Left lung (tissue), 14 donors: ENCODE measurements at regions of chr20 and their contacts with region 1.

Region 1: DNA sequence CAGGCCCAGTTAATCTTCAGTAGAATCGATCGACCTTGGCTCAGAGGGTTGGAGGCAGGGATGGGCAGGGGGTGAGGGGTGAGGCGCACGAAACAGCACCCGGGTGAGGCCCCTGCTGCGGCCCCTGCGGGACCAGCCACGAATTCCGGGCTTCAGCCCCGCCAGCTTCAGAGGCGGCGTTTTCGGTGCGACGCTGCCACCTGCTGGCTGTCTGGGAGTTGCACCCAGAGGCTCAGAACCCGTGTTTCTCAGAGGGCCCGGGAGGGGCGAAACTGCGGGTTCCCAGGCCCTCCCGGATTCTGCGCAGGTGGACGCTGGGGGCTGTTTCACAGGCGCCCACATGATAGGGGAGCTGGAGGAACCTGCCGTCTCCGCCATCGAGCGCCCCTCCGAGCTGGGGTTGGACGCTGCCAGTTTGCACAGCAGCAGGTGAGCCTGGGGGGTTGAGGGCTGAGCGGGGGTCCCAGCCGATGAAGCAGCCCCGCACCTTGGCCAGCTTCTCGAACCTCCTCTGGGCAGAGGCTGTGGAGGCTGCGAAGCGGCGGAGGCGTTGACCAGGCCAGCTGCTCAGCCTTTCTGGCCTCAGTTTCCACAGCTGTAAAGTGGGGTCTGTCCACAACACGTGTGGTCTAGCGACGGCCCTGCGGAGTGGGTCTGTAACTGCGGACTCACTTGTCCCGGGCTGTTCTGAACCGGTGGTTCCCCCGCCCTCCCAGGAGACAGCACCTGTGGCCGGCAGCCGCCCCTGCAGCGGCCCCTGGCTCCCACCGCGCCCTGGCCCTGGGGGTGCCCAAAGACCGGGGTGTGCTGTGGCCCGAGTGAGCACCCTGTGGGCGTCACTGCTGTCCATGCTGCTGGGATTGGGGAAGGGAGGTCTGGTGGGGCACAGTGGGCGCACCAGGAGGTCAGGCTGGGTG is 2.5 kb upstream of the BHLHE23 start:
- DNase-seq: peak; percentile 56 to 94 (median 72)
- ATAC-seq: peak; percentile 95
- H3K4me3 ChIP-seq: no peak overlapping the region
- H3K27ac ChIP-seq: no peak overlapping the region
- H3K4me1 ChIP-seq: peaks cover 4 to 36% of the 10 kb centered on the region in 2 donors
- H3K27me3 ChIP-seq: peaks cover 89 to 100% of the 10 kb centered on the region in 2 donors
- CTCF ChIP-seq: peak; percentile 94 to 95

Region 2: DNA sequence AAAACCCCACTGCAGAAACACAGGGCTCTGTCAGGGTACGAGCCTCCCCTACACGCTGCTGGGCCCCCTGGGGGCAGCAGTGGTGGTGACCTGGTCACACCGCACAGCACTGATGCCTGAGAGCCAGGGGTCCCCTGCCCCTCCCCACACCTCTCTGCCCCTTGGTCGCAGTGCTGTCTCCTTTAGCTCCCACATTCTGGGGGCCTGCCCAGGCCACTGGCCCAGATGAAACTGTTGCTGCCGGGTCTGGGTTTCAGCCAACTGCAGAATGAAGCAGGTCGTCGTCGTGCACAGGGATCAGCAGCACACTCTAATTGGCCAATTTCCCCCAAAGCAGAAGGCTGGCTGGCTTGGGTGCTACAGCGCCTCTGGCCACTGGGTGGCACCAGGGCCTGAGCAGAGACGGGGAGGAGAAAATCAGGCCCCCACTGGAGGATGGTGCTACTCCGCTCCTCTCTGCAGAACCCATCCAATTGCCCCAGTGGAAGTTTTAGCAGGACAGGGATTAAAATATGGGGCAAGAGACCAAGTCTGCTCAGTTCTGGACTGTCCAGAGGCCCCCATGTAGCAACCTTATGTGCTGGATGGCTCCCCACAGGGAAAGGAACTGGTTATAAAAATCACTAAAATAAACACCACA is 109.1 kb before region 1 on chr20:
- intact Hi-C with region 1: loop called (anchors 2 to 10 kb)
- DNase-seq: peak; percentile 50 to 86 (median 75)
- ATAC-seq: peak; percentile 94
- H3K4me3 ChIP-seq: no peak overlapping the region
- H3K27ac ChIP-seq: peak overlapping the region in 1 of 2 donors; percentile 7
- H3K4me1 ChIP-seq: peaks cover 7 to 21% of the 10 kb centered on the region in 2 donors
- H3K27me3 ChIP-seq: no peaks in the 10 kb centered on the region
- CTCF ChIP-seq: peak; percentile 84 to 91

Region 3: DNA sequence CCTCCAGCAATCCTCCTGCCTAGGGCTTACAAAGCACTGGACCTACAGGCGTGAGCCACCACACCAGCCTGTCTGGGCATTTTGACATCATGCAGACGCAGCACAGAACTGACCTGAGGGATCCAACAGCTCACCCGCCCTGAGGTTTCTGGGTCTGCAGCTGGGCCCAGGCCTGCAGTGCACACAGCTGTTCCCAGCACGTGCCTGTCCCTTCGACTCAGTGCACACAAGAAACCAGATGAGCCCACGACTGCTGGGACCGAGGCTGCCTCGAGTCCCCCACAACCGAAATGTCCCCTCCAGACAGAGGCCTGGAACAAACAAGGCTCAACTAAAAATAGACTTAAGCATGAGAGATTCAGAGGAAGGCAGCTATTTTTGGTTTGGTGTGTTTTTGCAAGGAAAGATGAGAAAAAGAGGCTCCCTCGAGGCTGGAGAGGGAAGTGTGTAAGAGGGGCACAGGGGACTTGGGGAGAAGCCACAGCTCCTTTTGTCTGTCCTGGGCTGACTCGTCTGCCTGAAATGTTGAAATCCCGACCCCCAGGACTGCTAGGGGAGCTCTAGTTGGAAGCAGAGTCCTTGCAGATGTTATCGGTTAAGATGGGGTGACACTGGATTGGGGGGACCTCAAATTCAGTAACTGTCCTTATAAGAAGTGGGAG is 140.4 kb after region 1 on chr20:
- intact Hi-C with region 1: no loop called
- DNase-seq: no peak
- ATAC-seq: no peak
- H3K4me3 ChIP-seq: no peak overlapping the region
- H3K27ac ChIP-seq: no peak overlapping the region
- H3K4me1 ChIP-seq: no peaks in the 10 kb centered on the region
- H3K27me3 ChIP-seq: peaks cover 0 to 79% of the 10 kb centered on the region in 2 donors
- CTCF ChIP-seq: no peak

Region 4: GRCh38 chr20:63664861-63665716 is 655.8 kb after region 1 on chr20:
- intact Hi-C with region 1: no loop called
- DNase-seq: peak in 1 of 4 donors; percentile 75
- ATAC-seq: no peak
- H3K4me3 ChIP-seq: no peak overlapping the region
- H3K27ac ChIP-seq: no peak overlapping the region
- H3K4me1 ChIP-seq: peaks cover 0 to 3% of the 10 kb centered on the region in 2 donors
- H3K27me3 ChIP-seq: no peaks in the 10 kb centered on the region
- CTCF ChIP-seq: no peak